ENCODE measurements at regions of chr7 and their contacts with region 1.

Region 1: DNA sequence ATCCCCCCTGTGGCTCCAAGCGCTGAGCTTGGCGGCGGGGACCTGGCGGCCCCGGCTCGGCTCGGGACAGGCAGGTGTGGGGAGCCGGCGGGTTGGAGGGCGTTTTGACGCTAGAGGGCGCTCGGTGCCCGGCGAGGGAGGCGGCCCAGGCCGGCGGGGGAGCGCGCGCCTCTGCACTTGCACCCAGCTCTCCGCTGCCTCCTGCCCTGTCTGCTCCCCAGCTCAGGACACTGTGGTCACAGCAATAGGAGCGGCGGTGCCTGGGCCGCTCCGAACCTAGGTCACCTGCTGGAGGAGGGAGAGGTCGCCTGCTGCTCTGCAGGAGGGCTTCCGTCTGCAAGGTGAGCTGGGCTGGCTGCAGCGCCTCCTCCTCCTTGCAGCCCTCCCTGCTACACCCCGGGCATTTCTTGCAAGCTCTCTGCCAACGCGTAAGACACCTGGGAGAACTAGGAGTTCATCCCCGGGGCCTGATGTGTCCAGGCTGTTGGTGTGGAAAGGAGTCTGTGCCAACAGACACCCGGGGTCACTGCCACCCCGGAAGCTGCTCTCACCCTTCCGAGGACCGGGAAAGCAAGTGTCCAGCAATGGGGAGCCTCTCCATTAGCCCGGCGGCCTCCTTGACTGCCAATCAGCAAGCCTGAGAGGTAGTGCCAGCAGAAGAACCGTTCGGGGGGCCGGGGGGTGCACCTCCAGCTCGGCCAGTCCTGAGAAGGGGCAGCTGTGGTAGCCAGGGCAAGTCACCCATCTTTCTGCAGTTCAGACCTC is 620.4 kb downstream of the GALNT17 start:
- H3K4me3 Mint-ChIP-seq: no peak overlapping the region
- H3K27ac Mint-ChIP-seq: no peak overlapping the region
- H3K4me1 Mint-ChIP-seq: no peaks in the 10 kb centered on the region
- H3K27me3 Mint-ChIP-seq: peaks cover 15% of the 10 kb centered on the region

Region 2: GRCh38 chr7:72334066-72334465 is 581.7 kb after region 1 on chr7:
- intact Hi-C with region 1: loop called (anchors 5 kb)
- H3K4me3 Mint-ChIP-seq: no peak overlapping the region
- H3K27ac Mint-ChIP-seq: no peak overlapping the region
- H3K4me1 Mint-ChIP-seq: peaks cover 7% of the 10 kb centered on the region
- H3K27me3 Mint-ChIP-seq: peaks cover 44% of the 10 kb centered on the region

Region 3: GRCh38 chr7:72493850-72494661 is 741.7 kb after region 1 on chr7:
- intact Hi-C with region 1: loop called (anchors 1 kb)
- H3K4me3 Mint-ChIP-seq: no peak overlapping the region
- H3K27ac Mint-ChIP-seq: no peak overlapping the region
- H3K4me1 Mint-ChIP-seq: no peaks in the 10 kb centered on the region
- H3K27me3 Mint-ChIP-seq: no peaks in the 10 kb centered on the region

Region 4: GRCh38 chr7:72785166-72785955 is 1033.0 kb after region 1 on chr7:
- intact Hi-C with region 1: loop called (anchors 5 kb)
- H3K4me3 Mint-ChIP-seq: no peak overlapping the region
- H3K27ac Mint-ChIP-seq: no peak overlapping the region
- H3K4me1 Mint-ChIP-seq: no peaks in the 10 kb centered on the region
- H3K27me3 Mint-ChIP-seq: no peaks in the 10 kb centered on the region

Measured in dendritic cell treated with granulocyte-macrophage colony-stimulating factor and Interleukin-4, amounts not matched to agents 40 ng/mL and 50 ng/mL, for 4 days (primary cell).